ENCODE measurements at regions of chr7 and their contacts with region 1.

Region 1: GRCh38 chr7:73858807-73859206 is 2.2 kb upstream of the TMEM270 start:
- DNase-seq: no peak

Region 2: DNA sequence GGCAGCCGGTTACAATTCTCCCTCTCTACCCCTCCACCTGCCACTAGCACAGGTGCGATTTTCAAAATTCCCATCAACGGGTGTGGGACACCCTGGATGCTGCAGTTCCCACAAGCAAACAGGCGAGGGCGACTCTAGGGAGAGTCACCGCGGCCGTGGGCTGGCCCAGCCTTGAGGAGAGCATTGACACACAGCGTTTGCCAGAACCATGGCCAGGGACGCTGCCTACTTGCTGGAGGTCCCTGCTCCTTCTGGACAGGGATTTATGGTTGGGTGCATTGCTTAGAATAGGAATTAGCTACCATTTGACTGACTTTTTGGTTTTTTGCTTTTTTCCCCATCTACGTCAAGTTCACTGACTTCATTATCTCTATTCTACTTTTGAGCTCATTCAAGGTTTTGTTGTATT is 47.0 kb before region 1 on chr7:
- intact Hi-C with region 1: loop called (anchors 5 kb)
- DNase-seq: peak; percentile 91

Measured in posterior vena cava (tissue), 2 donors.